Activated CD8-positive, alpha-beta T cell treated with anti-CD3 and anti-CD28 coated beads for 36 hours (primary cell): ENCODE measurements at regions of chr9 and their contacts with region 1.

Region 1: GRCh38 chr9:34475097-34475496 is 16.5 kb downstream of the DNAI1 start:
- DNase-seq: no peak
- ATAC-seq: no peak
- H3K4me3 Mint-ChIP-seq: no peak overlapping the region
- H3K27ac Mint-ChIP-seq: no peak overlapping the region
- H3K4me1 Mint-ChIP-seq: no peaks in the 10 kb centered on the region
- H3K27me3 Mint-ChIP-seq: peaks cover 5% of the 10 kb centered on the region
- CTCF ChIP-seq: no peak

Region 2: DNA sequence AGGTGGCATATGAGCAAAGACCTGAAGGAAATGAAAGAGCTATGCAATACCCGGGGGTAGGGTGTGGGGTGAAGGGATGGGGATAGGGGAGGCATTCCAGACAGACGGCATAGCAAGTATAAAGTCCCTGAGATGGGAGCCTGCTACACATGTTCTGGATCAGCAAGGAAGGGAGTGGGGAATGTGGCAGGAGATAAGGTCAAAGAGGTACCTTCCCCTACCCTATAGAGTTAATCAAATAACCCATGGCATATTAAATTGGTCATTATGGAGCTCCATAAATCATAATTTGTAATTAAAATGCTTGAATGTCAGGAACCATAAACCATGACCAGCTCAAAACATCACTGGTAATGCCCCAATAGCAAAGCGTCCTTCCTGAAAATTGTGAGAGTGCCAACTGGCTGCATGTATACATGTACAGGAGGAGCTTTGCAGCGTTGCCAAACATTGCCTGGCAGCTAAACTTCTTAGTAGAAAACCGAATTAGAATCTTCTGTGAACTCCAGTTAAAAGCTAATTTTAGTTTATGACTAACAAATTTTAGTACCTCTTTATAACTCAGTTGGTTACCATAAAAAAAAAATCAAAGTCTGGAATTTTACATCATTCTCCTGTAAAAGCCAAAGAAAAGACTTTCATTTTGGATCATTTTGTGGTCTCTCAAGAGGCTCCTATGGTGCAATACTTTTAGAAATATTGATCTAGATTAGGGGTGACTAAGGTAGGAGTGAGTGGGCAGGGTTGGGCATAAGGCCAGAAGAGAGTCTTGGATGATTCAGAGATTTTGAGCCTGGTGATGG is 11.8 kb before region 1 on chr9:
- CTCF ChIA-PET with region 1: interaction called, 6 read pairs
- POLR2A ChIA-PET with region 1: interaction called, 12 read pairs
- intact Hi-C with region 1: no loop called
- DNase-seq: peak; percentile 83
- ATAC-seq: peak; percentile 82
- H3K4me3 Mint-ChIP-seq: no peak overlapping the region
- H3K27ac Mint-ChIP-seq: no peak overlapping the region
- H3K4me1 Mint-ChIP-seq: peaks cover 11% of the 10 kb centered on the region
- H3K27me3 Mint-ChIP-seq: peaks cover 12% of the 10 kb centered on the region
- CTCF ChIP-seq: no peak